GM12878 (cell line): ENCODE measurements at regions of chr4 and their contacts with region 1.

Region 1: GRCh38 chr4:40056716-40057585 is at the start of gene N4BP2:
- DNase-seq: peak; percentile 5
- ATAC-seq: peak; percentile 80
- H3K4me3 ChIP-seq: peak within 1 kb of the TSS; percentile 83
- H3K27ac ChIP-seq: peak within 1 kb of the TSS; percentile 80
- H3K4me1 ChIP-seq: peaks cover 10% of the 10 kb centered on the region
- H3K27me3 ChIP-seq: no peaks in the 10 kb centered on the region
- CTCF ChIP-seq: peak; percentile 73 to 97 (median 78)
- EP300 ChIP-seq: no peak
- POLR2A ChIP-seq: peak; percentile 80
- RAD21 ChIP-seq: peak; percentile 80
- polyA plus RNA-seq, gene N4BP2: 2.3 to 3.6 TPM

Region 2: GRCh38 chr4:40185830-40186664 is 129.1 kb after region 1 on chr4:
- CTCF ChIA-PET with region 1: interaction called, 3 read pairs
- POLR2A ChIA-PET with region 1: interaction called, 4 read pairs
- RAD21 ChIA-PET with region 1: interaction called, 12 read pairs
- SMC1A ChIA-PET with region 1: interaction called, 4 read pairs
- in situ Hi-C with region 1: no loop called
- intact Hi-C with region 1: no loop called
- DNase-seq: peak; percentile 94
- ATAC-seq: peak; percentile 66
- H3K4me3 ChIP-seq: no peak overlapping the region
- H3K27ac ChIP-seq: peak overlapping the region; percentile 89
- H3K4me1 ChIP-seq: peaks cover 46% of the 10 kb centered on the region
- H3K27me3 ChIP-seq: no peaks in the 10 kb centered on the region
- CTCF ChIP-seq: no peak
- EP300 ChIP-seq: peak; percentile 81 to 90
- POLR2A ChIP-seq: 0 out of 2 replicates have a peak, but pooled peaks have one; percentile 31
- RAD21 ChIP-seq: 0 out of 2 replicates have a peak, but pooled peaks have one; percentile 0

Region 3: DNA sequence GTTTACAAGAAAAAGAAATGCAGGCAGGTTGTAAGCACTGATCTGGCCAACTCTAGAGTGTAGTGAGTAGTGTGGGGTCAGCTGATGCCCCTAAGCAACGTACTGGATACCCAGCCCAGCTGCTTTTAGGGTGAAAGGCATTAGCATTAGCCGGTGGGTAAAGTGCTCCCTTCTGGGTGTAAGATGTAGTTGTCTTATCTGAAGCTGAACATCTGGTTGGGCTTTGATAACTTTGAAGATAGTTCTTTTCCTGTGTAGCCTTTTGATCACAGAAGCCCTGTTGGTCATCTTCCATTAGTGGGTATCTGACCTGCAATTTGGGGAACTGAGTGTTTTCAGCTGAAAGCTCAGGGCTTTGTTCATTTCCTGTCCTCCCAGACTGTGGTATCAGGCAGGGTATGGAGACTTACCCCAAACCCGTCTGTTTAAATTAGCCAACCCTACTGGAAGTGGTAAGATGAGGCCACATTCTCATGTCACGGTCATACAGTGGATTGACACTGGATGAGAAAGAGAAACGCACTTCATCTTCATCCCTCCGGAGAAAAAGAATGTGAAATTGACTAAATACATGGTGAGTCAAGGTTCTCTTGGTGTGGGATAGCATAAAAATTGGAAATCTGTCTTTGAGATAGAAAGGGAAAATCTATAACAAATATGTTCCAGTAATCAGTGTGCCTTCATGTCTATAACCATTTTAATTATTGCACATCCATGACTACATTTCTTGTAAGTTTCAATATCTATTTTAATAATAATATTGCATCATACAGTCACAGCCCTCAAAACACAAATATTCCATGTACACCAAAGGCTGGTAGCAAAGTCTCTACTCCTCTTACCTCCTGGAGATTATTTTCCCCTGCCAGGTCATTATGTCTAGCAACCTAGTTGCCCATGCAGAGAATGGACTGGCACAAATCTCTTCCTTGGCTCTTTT is 148.6 kb after region 1 on chr4:
- CTCF ChIA-PET with region 1: no interaction called
- POLR2A ChIA-PET with region 1: no interaction called
- RAD21 ChIA-PET with region 1: interaction called, 4 read pairs
- SMC1A ChIA-PET with region 1: interaction called, 3 read pairs
- in situ Hi-C with region 1: no loop called
- intact Hi-C with region 1: loop called (anchors 2 kb)
- DNase-seq: peak; percentile 96
- ATAC-seq: peak; percentile 57
- H3K4me3 ChIP-seq: peak overlapping the region; percentile 72
- H3K27ac ChIP-seq: peak overlapping the region; percentile 92
- H3K4me1 ChIP-seq: peaks cover 22% of the 10 kb centered on the region
- H3K27me3 ChIP-seq: no peaks in the 10 kb centered on the region
- CTCF ChIP-seq: no peak
- EP300 ChIP-seq: peak; percentile 78 to 86
- POLR2A ChIP-seq: peak; percentile 57
- RAD21 ChIP-seq: 0 out of 2 replicates have a peak, but pooled peaks have one; percentile 1

Region 4: DNA sequence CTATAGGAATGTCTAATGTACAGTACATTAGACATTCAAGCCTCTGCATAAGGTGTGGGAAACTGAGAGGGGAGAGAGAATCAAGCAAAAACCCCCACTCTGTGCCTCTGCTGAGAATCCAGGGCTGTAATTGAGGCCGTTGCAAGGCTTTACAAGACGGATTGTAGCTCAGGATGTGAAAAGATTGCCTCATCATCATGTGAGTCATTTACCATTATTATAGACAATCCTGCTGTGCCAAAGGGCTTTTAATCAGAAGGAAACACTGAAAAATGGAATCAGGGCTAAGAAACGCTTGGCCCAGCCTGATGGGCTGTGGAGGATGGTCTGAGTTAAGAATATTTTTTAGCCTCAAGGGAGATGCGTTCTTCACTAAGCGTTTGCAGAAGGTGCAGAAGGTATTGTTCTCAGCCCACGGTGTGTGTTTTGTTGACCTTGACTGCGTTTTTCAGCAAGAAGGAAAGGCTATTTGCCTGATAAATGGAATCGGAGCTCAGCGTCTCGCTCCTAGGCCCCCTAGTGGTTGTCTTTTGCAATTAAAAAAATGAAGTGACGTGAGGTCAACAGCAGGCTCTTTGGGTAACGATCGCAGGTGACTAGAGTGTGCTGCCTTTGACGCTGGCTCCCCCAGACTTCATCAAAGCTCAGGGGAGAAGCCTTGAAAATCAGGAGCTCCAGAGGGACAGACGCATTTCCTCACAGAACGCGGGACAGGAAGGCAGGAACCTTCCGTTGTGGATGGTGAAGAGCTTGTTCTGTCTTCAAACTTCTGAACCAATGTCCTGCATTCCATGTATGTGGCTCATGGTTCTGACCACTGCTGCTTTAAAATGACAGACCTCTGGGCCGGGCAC is 260.1 kb after region 1 on chr4:
- CTCF ChIA-PET with region 1: interaction called, 15 read pairs
- POLR2A ChIA-PET with region 1: interaction called, 3 read pairs
- RAD21 ChIA-PET with region 1: interaction called, 28 read pairs
- SMC1A ChIA-PET with region 1: interaction called, 17 read pairs
- in situ Hi-C with region 1: loop called (anchors 5 kb)
- intact Hi-C with region 1: loop called (anchors 2 kb)
- DNase-seq: peak; percentile 78
- ATAC-seq: peak; percentile 86
- H3K4me3 ChIP-seq: peak overlapping the region; percentile 62
- H3K27ac ChIP-seq: peak overlapping the region; percentile 75
- H3K4me1 ChIP-seq: peaks cover 10% of the 10 kb centered on the region
- H3K27me3 ChIP-seq: no peaks in the 10 kb centered on the region
- CTCF ChIP-seq: peak; percentile 75 to 88 (median 82)
- EP300 ChIP-seq: no peak
- POLR2A ChIP-seq: 0 out of 2 replicates have a peak, but pooled peaks have one; percentile 32
- RAD21 ChIP-seq: peak; percentile 74

Region 5: GRCh38 chr4:40550948-40551462 is 494.1 kb after region 1 on chr4:
- CTCF ChIA-PET with region 1: no interaction called
- POLR2A ChIA-PET with region 1: no interaction called
- RAD21 ChIA-PET with region 1: interaction called, 3 read pairs
- SMC1A ChIA-PET with region 1: no interaction called
- in situ Hi-C with region 1: no loop called
- intact Hi-C with region 1: loop called (anchors 5 kb)
- DNase-seq: peak; percentile 76
- ATAC-seq: peak; percentile 89
- H3K4me3 ChIP-seq: peak overlapping the region; percentile 20
- H3K27ac ChIP-seq: peak overlapping the region; percentile 47
- H3K4me1 ChIP-seq: peaks cover 18% of the 10 kb centered on the region; the same call in 1 of the 2 replicates
- H3K27me3 ChIP-seq: no peaks in the 10 kb centered on the region
- CTCF ChIP-seq: peak; percentile 42 to 53 (median 47); a peak in 5 of 6 replicates
- EP300 ChIP-seq: peak in 1 of 2 experiments; percentile 6; a peak in 1 of 4 replicates
- POLR2A ChIP-seq: no peak
- RAD21 ChIP-seq: peak; percentile 71